HepG2 (cell line): ENCODE measurements at regions of chr3 and their contacts with region 1.

Region 1: DNA sequence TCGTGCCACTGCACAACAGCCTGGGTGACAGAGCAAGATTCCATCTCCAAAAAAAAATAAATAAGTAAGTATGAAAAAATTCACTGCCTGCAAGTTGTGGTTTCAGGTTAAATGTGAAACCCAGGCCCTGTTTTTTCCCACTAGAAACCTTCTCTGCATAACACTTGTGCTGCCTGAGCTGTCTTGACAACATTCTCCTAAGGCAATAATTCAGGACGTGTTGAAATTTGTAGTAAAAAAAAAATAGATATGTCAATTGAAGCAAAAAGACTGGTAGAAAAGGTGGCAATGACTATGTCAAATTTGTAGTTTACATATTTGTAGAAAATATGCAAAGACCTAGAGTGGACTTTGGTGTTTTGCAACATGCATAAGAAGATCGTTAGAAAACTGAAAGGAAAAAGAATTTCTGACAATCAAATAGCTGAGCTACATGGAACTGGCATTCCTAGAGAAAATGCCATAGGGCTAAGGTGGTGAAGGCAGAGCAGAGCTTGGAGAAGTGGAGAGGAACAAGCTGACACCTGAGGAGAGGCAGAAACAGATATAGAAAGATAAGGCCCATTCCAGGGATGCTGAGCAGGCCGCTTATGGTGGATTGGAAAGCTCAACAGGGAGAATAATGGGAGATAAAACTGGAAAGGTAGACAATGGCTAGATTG is 150.2 kb downstream of the PLCH1 start:
- DNase-seq: no peak
- ATAC-seq: peak; percentile 72
- H3K4me3 ChIP-seq: no peak overlapping the region
- H3K27ac ChIP-seq: peak overlapping the region; percentile 4
- H3K4me1 ChIP-seq: peaks cover 22% of the 10 kb centered on the region
- H3K27me3 ChIP-seq: no peaks in the 10 kb centered on the region
- CTCF ChIP-seq: no peak
- EP300 ChIP-seq: no peak
- POLR2A ChIP-seq: no peak
- RAD21 ChIP-seq: no peak

Region 2: DNA sequence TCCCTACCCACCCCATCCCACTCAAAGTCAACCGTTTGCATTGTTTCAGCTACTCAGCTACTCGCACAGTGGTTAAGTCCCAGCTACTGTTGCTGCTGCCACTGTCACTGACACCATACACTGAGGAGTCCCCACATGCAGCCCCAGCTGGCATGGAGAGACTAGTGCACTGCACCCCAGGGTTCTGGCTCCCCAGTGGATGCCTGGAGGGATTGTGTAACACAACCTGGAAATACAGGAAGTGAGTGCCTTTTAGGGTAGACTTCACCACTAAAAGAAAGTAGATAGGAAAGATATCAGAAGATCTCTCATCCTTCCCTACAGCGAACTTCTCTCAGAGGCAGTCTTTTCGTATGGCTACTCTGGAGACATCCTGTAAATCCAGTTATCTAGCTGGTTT is 132.0 kb before region 1 on chr3:
- CTCF ChIA-PET with region 1: no interaction called
- POLR2A ChIA-PET with region 1: no interaction called
- in situ Hi-C with region 1: no loop called
- intact Hi-C with region 1: no loop called
- DNase-seq: no peak
- ATAC-seq: no peak
- H3K4me3 ChIP-seq: no peak overlapping the region
- H3K27ac ChIP-seq: no peak overlapping the region
- H3K4me1 ChIP-seq: no peaks in the 10 kb centered on the region
- H3K27me3 ChIP-seq: no peaks in the 10 kb centered on the region
- CTCF ChIP-seq: no peak
- EP300 ChIP-seq: no peak
- POLR2A ChIP-seq: no peak
- RAD21 ChIP-seq: no peak

Region 3: DNA sequence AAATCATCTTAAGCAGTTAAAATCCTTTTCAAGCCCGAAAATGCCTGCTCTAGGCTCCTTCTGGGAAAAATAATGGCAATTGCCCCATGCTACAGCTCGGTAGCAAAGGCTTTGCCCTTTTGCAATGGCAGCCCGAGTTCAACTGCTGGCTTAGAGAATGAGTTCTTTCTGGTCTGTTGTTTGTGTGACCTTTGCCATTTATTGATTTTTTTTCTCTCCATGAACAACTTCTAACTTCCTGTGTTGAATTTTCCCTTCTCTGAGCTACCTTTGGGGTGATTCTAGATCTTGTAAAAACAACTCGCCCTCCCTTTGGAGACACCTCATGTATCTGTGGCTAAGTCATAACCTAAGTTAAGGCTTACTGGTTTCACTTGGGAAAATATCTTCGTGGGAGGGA is 10.9 kb after region 1 on chr3:
- CTCF ChIA-PET with region 1: no interaction called
- POLR2A ChIA-PET with region 1: interaction called, 17 read pairs
- in situ Hi-C with region 1: no loop called
- intact Hi-C with region 1: no loop called
- DNase-seq: peak; percentile 92
- ATAC-seq: peak; percentile 97
- H3K4me3 ChIP-seq: no peak overlapping the region; a peak in 2 of 6 replicates
- H3K27ac ChIP-seq: peak overlapping the region; percentile 82
- H3K4me1 ChIP-seq: peaks cover 69% of the 10 kb centered on the region
- H3K27me3 ChIP-seq: no peaks in the 10 kb centered on the region
- CTCF ChIP-seq: no peak
- EP300 ChIP-seq: peak; percentile 48 to 92; a peak in 3 of 4 replicates
- POLR2A ChIP-seq: no peak
- RAD21 ChIP-seq: no peak